ENCODE measurements at regions of chr13 and their contacts with region 1.

Region 1: DNA sequence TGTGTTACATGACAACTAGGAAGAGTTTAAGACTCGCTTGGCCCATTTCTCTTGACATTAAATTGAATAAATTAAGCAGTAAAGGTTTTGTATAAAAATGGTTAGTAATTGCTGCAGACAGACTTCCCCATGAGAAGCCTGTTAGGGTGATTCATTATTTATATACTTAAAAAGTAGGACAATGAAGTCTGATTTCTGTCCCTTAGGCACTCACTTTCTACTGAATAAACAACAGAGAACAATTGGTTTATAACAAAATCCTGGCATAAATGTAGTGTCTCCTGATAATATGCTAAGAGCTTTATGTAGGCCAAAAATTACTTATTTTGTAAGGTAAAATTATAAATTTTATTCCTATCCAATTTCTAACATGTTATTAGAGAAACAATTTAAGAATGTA is 2138.5 kb upstream of the PCDH20 start:
- DNase-seq: no peak
- H3K4me3 ChIP-seq: no peak overlapping the region
- H3K27ac ChIP-seq: no peak overlapping the region
- H3K4me1 ChIP-seq: no peaks in the 10 kb centered on the region
- H3K27me3 ChIP-seq: no peaks in the 10 kb centered on the region
- CTCF ChIP-seq: no peak
- POLR2A ChIP-seq: no peak

Region 2: GRCh38 chr13:62629618-62630017 is 924.5 kb before region 1 on chr13:
- intact Hi-C with region 1: loop called (anchors 10 kb)
- DNase-seq: no peak
- H3K4me3 ChIP-seq: no peak overlapping the region
- H3K27ac ChIP-seq: no peak overlapping the region
- H3K4me1 ChIP-seq: no peaks in the 10 kb centered on the region
- H3K27me3 ChIP-seq: no peaks in the 10 kb centered on the region
- CTCF ChIP-seq: no peak
- POLR2A ChIP-seq: no peak

Region 3: GRCh38 chr13:63542770-63543169 is 11.4 kb before region 1 on chr13:
- intact Hi-C with region 1: no loop called
- DNase-seq: no peak
- H3K4me3 ChIP-seq: no peak overlapping the region
- H3K27ac ChIP-seq: no peak overlapping the region
- H3K4me1 ChIP-seq: no peaks in the 10 kb centered on the region
- H3K27me3 ChIP-seq: no peaks in the 10 kb centered on the region
- CTCF ChIP-seq: no peak
- POLR2A ChIP-seq: no peak

Region 4: DNA sequence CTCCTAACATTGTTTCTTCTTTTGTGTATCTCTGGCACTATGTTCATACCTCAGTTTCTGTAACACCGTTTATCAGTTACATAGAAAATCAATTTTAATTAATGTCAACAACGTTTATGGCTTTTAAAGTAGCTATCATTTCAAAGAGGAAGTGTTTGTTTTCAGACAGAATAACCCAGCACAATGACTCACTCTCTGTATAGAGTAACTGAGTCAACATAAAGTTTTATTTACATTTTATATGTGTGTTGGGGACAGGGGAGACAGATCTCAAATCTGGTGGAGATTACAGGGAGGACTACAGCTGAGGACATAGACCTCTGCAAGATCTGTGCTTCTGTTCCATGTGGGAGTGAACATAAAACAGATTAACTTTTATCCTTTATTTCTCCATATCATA is 1085.8 kb after region 1 on chr13:
- intact Hi-C with region 1: no loop called
- DNase-seq: no peak
- H3K4me3 ChIP-seq: no peak overlapping the region
- H3K27ac ChIP-seq: no peak overlapping the region
- H3K4me1 ChIP-seq: no peaks in the 10 kb centered on the region
- H3K27me3 ChIP-seq: no peaks in the 10 kb centered on the region
- CTCF ChIP-seq: no peak
- POLR2A ChIP-seq: no peak